ENCODE measurements at regions of chr2 and their contacts with region 1.

Region 1: GRCh38 chr2:181715033-181715630 is 34.8 kb upstream of the NEUROD1 start:
- DNase-seq: peak; percentile 56
- ATAC-seq: peak; percentile 93
- H3K4me3 ChIP-seq: no peak overlapping the region
- H3K27ac ChIP-seq: no peak overlapping the region
- H3K4me1 ChIP-seq: no peaks in the 10 kb centered on the region
- H3K27me3 ChIP-seq: no peaks in the 10 kb centered on the region
- CTCF ChIP-seq: peak; percentile 55 to 85 (median 70)
- EP300 ChIP-seq: no peak
- POLR2A ChIP-seq: no peak
- RAD21 ChIP-seq: peak; percentile 96

Region 2: DNA sequence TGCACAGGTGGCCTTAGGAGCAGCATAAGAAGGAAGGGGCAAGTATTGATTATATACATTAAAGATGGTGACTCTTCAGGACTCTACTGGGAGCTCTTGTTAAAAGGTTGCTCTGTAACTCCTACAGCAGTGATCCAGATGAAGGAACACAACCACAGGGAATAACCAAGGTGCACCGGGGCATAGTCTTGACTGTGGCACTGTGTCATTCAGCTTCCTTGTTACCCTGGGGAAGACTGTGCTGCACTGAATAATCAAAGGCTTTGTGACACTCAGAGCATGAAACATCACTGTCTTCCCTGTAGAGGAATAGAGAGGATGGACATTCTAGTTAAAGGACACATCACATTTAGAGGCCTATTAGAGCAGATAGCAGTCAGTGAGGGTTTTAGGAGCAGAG is 629.4 kb before region 1 on chr2:
- CTCF ChIA-PET with region 1: interaction called, 18 read pairs
- POLR2A ChIA-PET with region 1: no interaction called
- RAD21 ChIA-PET with region 1: interaction called, 6 read pairs
- SMC1A ChIA-PET with region 1: interaction called, 9 read pairs
- in situ Hi-C with region 1: loop called (anchors 5 kb)
- intact Hi-C with region 1: no loop called
- DNase-seq: no peak
- ATAC-seq: no peak
- H3K4me3 ChIP-seq: no peak overlapping the region
- H3K27ac ChIP-seq: no peak overlapping the region
- H3K4me1 ChIP-seq: no peaks in the 10 kb centered on the region
- H3K27me3 ChIP-seq: no peaks in the 10 kb centered on the region
- CTCF ChIP-seq: no peak
- EP300 ChIP-seq: no peak
- POLR2A ChIP-seq: no peak
- RAD21 ChIP-seq: no peak

Region 3: GRCh38 chr2:181305301-181306123 is 409.6 kb before region 1 on chr2:
- CTCF ChIA-PET with region 1: interaction called, 61 read pairs
- POLR2A ChIA-PET with region 1: no interaction called
- RAD21 ChIA-PET with region 1: interaction called, 51 read pairs
- SMC1A ChIA-PET with region 1: interaction called, 55 read pairs
- in situ Hi-C with region 1: no loop called
- intact Hi-C with region 1: loop called (anchors 1 kb)
- DNase-seq: peak; percentile 96
- ATAC-seq: peak; percentile 80
- H3K4me3 ChIP-seq: no peak overlapping the region
- H3K27ac ChIP-seq: peak overlapping the region; percentile 99
- H3K4me1 ChIP-seq: peaks cover 49% of the 10 kb centered on the region
- H3K27me3 ChIP-seq: no peaks in the 10 kb centered on the region
- CTCF ChIP-seq: no peak
- EP300 ChIP-seq: peak; percentile 16 to 82; a peak in 3 of 4 replicates
- POLR2A ChIP-seq: peak; percentile 75
- RAD21 ChIP-seq: 0 out of 2 replicates have a peak, but pooled peaks have one; percentile 12

Region 4: GRCh38 chr2:181474227-181474881 is 240.8 kb before region 1 on chr2:
- CTCF ChIA-PET with region 1: interaction called, 10 read pairs
- POLR2A ChIA-PET with region 1: no interaction called
- RAD21 ChIA-PET with region 1: interaction called, 31 read pairs
- SMC1A ChIA-PET with region 1: interaction called, 29 read pairs
- in situ Hi-C with region 1: no loop called
- intact Hi-C with region 1: no loop called
- DNase-seq: no peak
- ATAC-seq: no peak
- H3K4me3 ChIP-seq: no peak overlapping the region
- H3K27ac ChIP-seq: no peak overlapping the region
- H3K4me1 ChIP-seq: peaks cover 19% of the 10 kb centered on the region
- H3K27me3 ChIP-seq: no peaks in the 10 kb centered on the region
- CTCF ChIP-seq: no peak
- EP300 ChIP-seq: no peak
- POLR2A ChIP-seq: no peak
- RAD21 ChIP-seq: no peak

Region 5: DNA sequence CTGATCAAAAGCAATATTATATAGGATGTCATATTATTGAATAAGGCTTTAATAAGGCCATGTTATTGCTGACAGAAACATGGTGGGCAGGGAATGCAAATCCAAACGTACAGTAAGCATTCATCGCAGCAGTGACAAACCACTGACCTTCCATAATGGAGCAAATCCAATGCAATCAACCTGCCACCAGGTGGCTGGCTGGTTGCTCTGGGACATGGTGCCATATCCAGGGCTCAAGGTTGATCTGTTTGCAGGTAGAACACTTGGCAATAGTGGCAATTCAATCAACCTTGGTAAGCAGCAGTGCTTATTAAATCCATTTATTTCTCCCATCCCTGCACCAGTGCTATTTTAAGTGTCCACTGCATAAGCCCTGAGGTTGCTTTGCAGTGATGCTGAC is 133.6 kb before region 1 on chr2:
- CTCF ChIA-PET with region 1: interaction called, 359 read pairs
- POLR2A ChIA-PET with region 1: no interaction called
- RAD21 ChIA-PET with region 1: interaction called, 254 read pairs
- SMC1A ChIA-PET with region 1: interaction called, 337 read pairs
- in situ Hi-C with region 1: loop called (anchors 5 kb)
- intact Hi-C with region 1: no loop called
- DNase-seq: no peak
- ATAC-seq: no peak; the same call in 2 of the 3 replicates
- H3K4me3 ChIP-seq: no peak overlapping the region
- H3K27ac ChIP-seq: no peak overlapping the region
- H3K4me1 ChIP-seq: peaks cover 9% of the 10 kb centered on the region
- H3K27me3 ChIP-seq: no peaks in the 10 kb centered on the region; a peak in 1 of 4 replicates
- CTCF ChIP-seq: peak in 2 of 3 experiments; percentile 13 to 15; a peak in 1 of 6 replicates
- EP300 ChIP-seq: no peak
- POLR2A ChIP-seq: no peak
- RAD21 ChIP-seq: no peak

Region 6: GRCh38 chr2:181697571-181697970 is 17.6 kb before region 1 on chr2:
- CTCF ChIA-PET with region 1: interaction called, 10 read pairs
- POLR2A ChIA-PET with region 1: no interaction called
- RAD21 ChIA-PET with region 1: interaction called, 6 read pairs
- SMC1A ChIA-PET with region 1: interaction called, 11 read pairs
- in situ Hi-C with region 1: no loop called
- intact Hi-C with region 1: no loop called
- DNase-seq: no peak
- ATAC-seq: no peak
- H3K4me3 ChIP-seq: no peak overlapping the region
- H3K27ac ChIP-seq: no peak overlapping the region
- H3K4me1 ChIP-seq: no peaks in the 10 kb centered on the region
- H3K27me3 ChIP-seq: no peaks in the 10 kb centered on the region
- CTCF ChIP-seq: no peak
- EP300 ChIP-seq: no peak
- POLR2A ChIP-seq: no peak
- RAD21 ChIP-seq: no peak

Region 7: GRCh38 chr2:181848261-181848886 is 133.2 kb after region 1 on chr2:
- CTCF ChIA-PET with region 1: no interaction called
- POLR2A ChIA-PET with region 1: no interaction called
- RAD21 ChIA-PET with region 1: no interaction called
- SMC1A ChIA-PET with region 1: no interaction called
- in situ Hi-C with region 1: no loop called
- intact Hi-C with region 1: no loop called
- DNase-seq: no peak
- ATAC-seq: no peak
- H3K4me3 ChIP-seq: no peak overlapping the region
- H3K27ac ChIP-seq: no peak overlapping the region
- H3K4me1 ChIP-seq: no peaks in the 10 kb centered on the region
- H3K27me3 ChIP-seq: no peaks in the 10 kb centered on the region
- CTCF ChIP-seq: no peak
- EP300 ChIP-seq: no peak
- POLR2A ChIP-seq: no peak
- RAD21 ChIP-seq: no peak

Measured in GM12878 (cell line).